ENCODE measurements at regions of chr2 and their contacts with region 1.

Region 1: DNA sequence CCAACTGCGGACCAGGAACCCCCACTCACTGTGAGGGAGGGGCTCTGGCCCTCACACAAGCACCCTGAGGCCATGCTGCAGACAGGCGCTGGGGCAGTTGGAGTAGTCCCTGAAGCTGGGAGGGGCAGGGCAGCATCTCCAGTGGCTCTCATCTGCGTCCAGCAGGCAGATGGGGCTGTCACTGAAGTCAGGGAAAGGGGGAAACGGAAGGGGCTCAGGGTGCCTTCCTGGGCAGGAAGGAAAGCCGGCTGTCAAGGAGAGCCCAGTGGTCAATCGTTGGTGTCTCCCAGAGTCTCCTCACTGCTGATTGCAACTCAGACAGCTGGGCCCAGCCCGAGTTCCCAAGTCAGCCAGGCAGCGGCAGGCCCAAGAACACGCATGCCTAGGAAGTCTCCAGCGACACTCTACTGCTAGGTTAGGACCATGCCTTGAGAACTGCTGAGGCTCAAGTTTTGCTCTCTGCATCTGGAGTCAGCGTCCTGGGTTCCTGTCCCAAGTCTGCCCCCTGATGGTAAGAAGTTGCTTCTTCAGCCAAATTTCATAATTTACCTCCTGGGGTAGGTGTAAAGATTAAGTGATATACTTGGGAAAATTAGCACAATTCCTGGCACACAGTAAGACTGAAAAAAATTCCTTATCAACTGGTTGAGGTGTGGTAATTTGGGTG is 27.5 kb upstream of the NMUR1 start:
- DNase-seq: peak; percentile 76
- ATAC-seq: peak; percentile 92
- H3K4me3 ChIP-seq: no peak overlapping the region
- H3K27ac ChIP-seq: no peak overlapping the region
- H3K4me1 ChIP-seq: no peaks in the 10 kb centered on the region
- H3K27me3 ChIP-seq: no peaks in the 10 kb centered on the region
- CTCF ChIP-seq: peak; percentile 79

Region 2: GRCh38 chr2:231138699-231139098 is 419.0 kb before region 1 on chr2:
- CTCF ChIA-PET with region 1: no interaction called
- POLR2A ChIA-PET with region 1: no interaction called
- intact Hi-C with region 1: no loop called
- DNase-seq: no peak
- ATAC-seq: no peak
- H3K4me3 ChIP-seq: no peak overlapping the region
- H3K27ac ChIP-seq: no peak overlapping the region
- H3K4me1 ChIP-seq: peaks cover 12% of the 10 kb centered on the region
- H3K27me3 ChIP-seq: no peaks in the 10 kb centered on the region
- CTCF ChIP-seq: no peak

Region 3: GRCh38 chr2:231170055-231170454 is 387.6 kb before region 1 on chr2:
- CTCF ChIA-PET with region 1: no interaction called
- POLR2A ChIA-PET with region 1: no interaction called
- intact Hi-C with region 1: no loop called
- DNase-seq: no peak
- ATAC-seq: no peak
- H3K4me3 ChIP-seq: no peak overlapping the region
- H3K27ac ChIP-seq: no peak overlapping the region
- H3K4me1 ChIP-seq: no peaks in the 10 kb centered on the region
- H3K27me3 ChIP-seq: no peaks in the 10 kb centered on the region
- CTCF ChIP-seq: no peak

Region 4: DNA sequence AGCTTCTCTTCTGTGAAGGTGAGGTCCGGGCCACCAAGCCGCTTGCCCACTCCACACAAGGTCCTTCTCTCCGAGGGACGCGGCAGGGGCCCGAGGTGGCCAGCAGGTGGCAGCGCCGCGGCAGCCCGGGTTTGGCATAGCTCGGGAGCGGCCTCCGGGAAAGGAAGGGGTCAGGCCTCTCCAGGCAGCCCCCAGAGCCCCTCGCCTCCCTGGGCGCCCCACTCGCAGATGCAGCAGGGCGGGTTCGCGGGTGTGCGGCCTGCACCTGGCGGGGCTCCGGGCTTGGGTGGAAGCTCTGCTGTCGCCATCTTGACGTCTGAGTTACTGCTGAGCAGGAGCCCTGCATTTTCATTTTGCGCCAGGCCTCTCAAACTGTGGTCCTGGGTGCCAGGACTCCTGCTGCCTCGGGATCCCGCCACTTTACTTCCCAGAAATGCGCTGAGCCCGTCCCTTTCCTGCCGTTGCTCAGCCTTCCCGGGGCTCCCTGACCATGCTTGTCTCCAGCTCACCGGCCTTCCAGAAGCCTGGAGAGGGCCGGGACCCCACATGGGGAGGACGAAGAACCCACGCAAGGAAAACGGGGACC is 74.8 kb before region 1 on chr2:
- CTCF ChIA-PET with region 1: no interaction called
- POLR2A ChIA-PET with region 1: no interaction called
- intact Hi-C with region 1: loop called (anchors 1 kb)
- DNase-seq: peak; percentile 69
- ATAC-seq: peak; percentile 98
- H3K4me3 ChIP-seq: peak overlapping the region; percentile 40; the same call in 1 of the 2 replicates
- H3K27ac ChIP-seq: no peak overlapping the region
- H3K4me1 ChIP-seq: 0 out of 2 replicates have a peak, but pooled peaks cover 4% of the 10 kb centered on the region
- H3K27me3 ChIP-seq: no peaks in the 10 kb centered on the region
- CTCF ChIP-seq: peak; percentile 86

Region 5: DNA sequence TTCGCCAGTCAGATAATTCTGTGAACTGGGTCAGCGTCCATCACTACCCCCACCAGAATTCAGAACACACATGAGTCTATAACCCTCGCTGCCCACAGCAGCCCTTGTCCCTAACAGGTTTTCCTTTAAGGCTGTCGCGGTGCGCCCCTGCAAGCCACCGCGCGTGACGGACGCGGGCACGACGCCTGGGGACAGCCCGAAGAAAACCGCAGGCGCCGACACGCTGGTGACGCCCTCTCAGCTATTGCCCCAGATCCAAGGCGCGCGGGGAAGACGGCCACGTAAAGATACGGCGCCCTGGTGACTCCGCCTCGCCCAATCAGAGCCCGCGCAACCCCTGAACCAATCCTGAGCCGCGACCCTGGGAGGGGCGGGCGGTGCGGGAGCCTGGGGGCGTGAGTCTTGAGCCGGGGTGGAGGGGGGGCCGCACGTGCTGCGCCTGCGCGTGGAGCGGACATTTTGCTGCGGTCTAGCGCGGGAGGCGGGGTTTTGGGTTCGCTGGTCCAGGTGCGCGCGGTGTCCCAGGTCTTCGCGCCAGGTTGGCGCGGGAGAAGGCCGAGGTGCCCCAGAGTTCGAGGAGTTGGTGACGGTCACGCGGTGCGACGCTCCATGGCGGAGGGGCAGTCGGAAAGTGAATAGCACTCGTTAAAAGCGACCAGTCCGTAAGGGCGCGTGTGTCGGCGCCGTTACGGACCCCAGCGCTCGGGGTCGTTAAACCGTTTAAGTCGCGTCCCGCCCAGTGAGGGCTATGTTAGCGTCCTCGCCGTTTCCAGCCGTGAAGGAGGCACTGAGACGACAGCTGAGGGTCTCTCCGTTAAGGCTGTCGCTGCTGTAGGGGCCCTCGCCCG is 43.4 kb before region 1 on chr2:
- CTCF ChIA-PET with region 1: no interaction called
- POLR2A ChIA-PET with region 1: no interaction called
- intact Hi-C with region 1: loop called (anchors 1 kb)
- DNase-seq: peak; percentile 96
- ATAC-seq: peak; percentile 100
- H3K4me3 ChIP-seq: peak overlapping the region; percentile 74
- H3K27ac ChIP-seq: peak overlapping the region; percentile 21
- H3K4me1 ChIP-seq: peaks cover 17% of the 10 kb centered on the region
- H3K27me3 ChIP-seq: no peaks in the 10 kb centered on the region
- CTCF ChIP-seq: no peak

Region 6: DNA sequence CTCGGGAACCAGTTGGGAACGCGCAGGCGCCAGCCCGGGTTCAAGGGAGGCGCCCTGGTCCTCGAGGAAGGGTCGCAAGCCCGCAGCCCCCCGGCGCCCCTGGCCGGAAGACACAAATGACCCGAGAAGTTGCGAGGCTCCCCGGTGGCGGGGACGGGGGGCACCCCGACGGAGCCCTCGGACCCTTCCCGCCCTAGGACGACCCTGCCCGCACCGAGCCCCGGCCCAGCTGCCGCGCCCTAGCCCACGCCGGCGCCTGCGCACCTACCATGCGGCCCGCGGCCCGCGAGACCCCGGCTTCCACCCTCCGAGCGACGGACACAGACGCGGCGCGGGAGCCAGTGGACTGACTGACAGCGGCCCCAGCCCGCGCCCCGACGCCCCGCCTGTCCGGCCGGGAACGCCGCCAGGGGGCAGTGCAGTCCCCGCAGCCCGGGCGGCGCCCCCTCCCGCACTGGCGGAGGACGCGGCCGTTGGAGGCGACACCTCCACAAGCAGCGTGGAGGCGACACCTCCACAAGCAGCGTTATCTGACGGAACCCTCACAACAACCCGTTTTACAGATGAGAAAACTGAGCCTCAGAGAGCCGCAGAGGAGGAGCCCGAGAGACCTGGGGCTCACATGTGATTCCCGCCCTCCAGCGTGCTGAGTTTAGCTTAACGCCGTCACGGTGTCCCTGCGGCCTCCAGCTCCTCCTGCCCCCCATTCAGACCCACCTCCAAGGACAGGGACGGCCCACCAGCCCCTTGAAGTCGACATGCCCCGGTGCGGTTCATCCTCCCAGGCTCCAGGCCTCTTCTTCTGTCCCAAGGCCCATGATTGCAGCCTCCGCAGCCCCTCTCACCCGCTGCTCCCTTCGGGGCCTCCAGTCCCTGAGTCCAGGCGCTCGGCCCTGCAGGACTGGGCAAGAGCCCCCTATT is 27.4 kb before region 1 on chr2 and contains the start of gene NMUR1:
- CTCF ChIA-PET with region 1: no interaction called
- POLR2A ChIA-PET with region 1: no interaction called
- intact Hi-C with region 1: loop called (anchors 1 kb)
- DNase-seq: peak; percentile 43
- ATAC-seq: peak; percentile 75
- H3K4me3 ChIP-seq: peak within 1 kb of the TSS; percentile 56
- H3K27ac ChIP-seq: no peak within 1 kb of the TSS
- H3K4me1 ChIP-seq: no peaks in the 10 kb centered on the region
- H3K27me3 ChIP-seq: peaks cover 10% of the 10 kb centered on the region
- CTCF ChIP-seq: peak; percentile 85
- total RNA-seq, gene NMUR1: 0.17 TPM in 1 of 2 replicates, not detected in the other